ENCODE measurements at regions of chr17 and their contacts with region 1.

Region 1: DNA sequence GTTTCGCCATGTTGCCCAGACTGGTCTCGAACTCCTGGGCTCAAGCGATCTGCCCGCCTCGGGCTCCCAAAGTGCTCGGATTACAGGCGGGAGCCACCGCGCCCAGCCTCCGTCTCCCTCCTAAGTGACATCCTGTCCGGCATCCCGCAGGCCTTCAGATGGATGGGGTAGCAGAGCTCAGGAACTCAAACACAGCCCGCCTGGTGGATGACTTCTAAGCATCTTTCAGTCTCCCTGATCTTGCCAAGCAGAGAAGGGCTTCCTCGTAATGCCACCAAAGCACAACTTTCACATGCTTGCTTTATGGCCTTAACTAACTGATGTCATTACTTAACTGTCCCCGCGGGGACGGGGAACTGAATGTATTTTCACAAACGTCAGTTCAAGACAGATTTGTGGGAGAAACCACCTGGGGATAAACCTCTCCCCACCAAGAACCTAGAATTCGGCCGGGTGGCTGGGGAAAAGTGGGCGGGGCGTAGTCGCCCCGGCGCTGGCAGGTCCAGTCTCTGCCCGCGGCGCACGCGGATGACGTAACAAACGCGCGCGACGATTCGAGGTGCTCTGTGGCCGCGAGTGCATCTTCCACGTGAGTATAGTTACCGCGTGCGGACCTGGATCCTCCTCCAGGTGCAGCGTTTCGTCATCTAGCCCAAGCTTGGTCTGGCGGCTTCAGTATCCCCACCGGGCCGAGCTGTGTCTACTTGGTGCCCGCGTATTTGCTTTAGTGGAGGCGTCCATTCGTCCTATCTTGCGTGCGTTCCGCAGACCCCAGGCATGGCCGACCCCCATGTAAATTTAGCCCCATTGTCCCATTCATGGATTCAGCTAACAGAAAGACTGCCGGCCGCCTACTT is at the start of gene PFAS:
- DNase-seq: peak; percentile 93
- H3K4me3 ChIP-seq: peak within 1 kb of the TSS; percentile 82 to 96 (median 89)
- H3K27ac ChIP-seq: peak within 1 kb of the TSS; percentile 92
- H3K4me1 ChIP-seq: peaks cover 12% of the 10 kb centered on the region
- H3K27me3 ChIP-seq: no peaks in the 10 kb centered on the region
- CTCF ChIP-seq: no peak
- total RNA-seq, gene PFAS: 8.5 to 31.2 TPM

Region 2: DNA sequence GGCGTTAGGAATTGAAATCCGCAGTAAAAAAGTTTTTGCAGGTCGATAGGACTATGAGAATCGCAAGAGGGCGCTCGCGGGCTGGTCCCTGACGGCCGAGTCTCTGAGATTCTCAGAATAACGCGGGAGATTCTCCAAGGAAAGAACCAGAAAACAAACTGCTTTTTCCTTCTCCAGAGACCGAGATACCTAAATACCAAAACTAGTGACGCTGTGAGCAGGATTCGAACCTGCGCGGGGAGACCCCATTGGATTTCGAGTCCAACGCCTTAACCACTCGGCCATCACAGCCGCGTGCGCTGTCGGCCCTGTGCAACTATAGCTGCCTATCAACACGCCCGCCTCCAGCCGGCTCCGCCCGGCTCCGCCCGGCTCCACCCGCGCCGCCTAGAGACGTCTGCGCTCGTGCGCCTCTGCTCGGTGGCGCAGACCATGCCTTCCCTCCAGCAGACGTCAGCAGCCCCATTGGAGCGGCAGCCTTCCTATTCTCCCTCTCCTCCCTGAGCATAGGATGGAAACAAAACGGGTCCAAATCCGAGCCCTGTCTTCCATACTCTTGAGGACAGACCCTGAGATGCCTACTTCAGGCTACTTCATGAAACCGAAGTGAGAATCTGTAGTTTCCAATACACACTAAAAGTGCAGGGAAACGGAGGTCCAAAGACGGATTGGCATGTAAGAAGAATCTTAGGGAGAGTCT is 110.2 kb before region 1 on chr17:
- CTCF ChIA-PET with region 1: no interaction called
- dilution Hi-C with region 1: no loop called
- in situ Hi-C with region 1: no loop called
- intact Hi-C with region 1: loop called (anchors 1 kb)
- DNase-seq: peak; percentile 96
- H3K4me3 ChIP-seq: peak overlapping the region; percentile 10 to 44 (median 29)
- H3K27ac ChIP-seq: peak overlapping the region; percentile 61
- H3K4me1 ChIP-seq: peaks cover 18% of the 10 kb centered on the region
- H3K27me3 ChIP-seq: no peaks in the 10 kb centered on the region
- CTCF ChIP-seq: peak; percentile 83 to 89

Region 3: GRCh38 chr17:8173056-8173870 is 75.7 kb before region 1 on chr17:
- CTCF ChIA-PET with region 1: no interaction called
- dilution Hi-C with region 1: no loop called
- in situ Hi-C with region 1: no loop called
- intact Hi-C with region 1: loop called (anchors 1 kb)
- DNase-seq: peak; percentile 99
- H3K4me3 ChIP-seq: peak overlapping the region; percentile 38 to 53 (median 48)
- H3K27ac ChIP-seq: peak overlapping the region; percentile 100
- H3K4me1 ChIP-seq: peaks cover 25% of the 10 kb centered on the region
- H3K27me3 ChIP-seq: no peaks in the 10 kb centered on the region
- CTCF ChIP-seq: no peak

Region 4: GRCh38 chr17:8288336-8289102 is 39.5 kb after region 1 on chr17 and contains the start of gene RANGRF:
- CTCF ChIA-PET with region 1: interaction called, 3 read pairs
- dilution Hi-C with region 1: no loop called
- in situ Hi-C with region 1: no loop called
- intact Hi-C with region 1: loop called (anchors 5 kb)
- DNase-seq: peak; percentile 72
- H3K4me3 ChIP-seq: peak within 1 kb of the TSS; percentile 70 to 80 (median 76)
- H3K27ac ChIP-seq: peak within 1 kb of the TSS; percentile 62
- H3K4me1 ChIP-seq: peaks cover 12% of the 10 kb centered on the region
- H3K27me3 ChIP-seq: no peaks in the 10 kb centered on the region
- CTCF ChIP-seq: no peak
- total RNA-seq, gene RANGRF: 11.3 to 25.4 TPM

Region 5: DNA sequence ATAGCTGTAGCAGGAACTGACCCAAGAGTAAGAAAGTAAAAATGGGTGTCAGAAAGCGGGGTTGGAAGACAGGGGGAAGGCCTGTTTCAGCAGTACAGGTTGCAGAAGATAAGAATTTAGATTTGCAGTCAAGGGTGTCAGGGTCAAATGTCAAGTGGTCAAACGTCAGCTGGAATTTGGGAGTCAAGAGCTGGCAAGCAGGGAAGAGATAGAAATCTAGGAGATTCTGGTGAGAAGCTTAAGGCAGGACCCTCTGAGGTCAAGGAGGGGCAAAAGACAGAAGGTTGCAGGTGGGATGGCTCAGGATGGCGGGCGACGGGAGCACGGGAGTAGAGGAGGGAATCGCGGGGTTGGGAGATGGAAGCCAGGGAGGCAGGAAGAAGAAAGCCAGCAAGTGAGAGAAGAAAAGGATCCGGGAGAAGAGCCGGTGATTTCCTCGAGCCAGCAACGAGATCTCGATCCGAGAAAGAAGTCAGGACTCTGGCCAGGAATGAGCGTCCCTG is 45.9 kb after region 1 on chr17:
- CTCF ChIA-PET with region 1: no interaction called
- dilution Hi-C with region 1: loop called (anchors 5 kb)
- in situ Hi-C with region 1: no loop called
- intact Hi-C with region 1: loop called (anchors 1 kb)
- DNase-seq: no peak
- H3K4me3 ChIP-seq: peak overlapping the region; percentile 64 to 91 (median 74)
- H3K27ac ChIP-seq: peak overlapping the region; percentile 53
- H3K4me1 ChIP-seq: peaks cover 12% of the 10 kb centered on the region
- H3K27me3 ChIP-seq: no peaks in the 10 kb centered on the region
- CTCF ChIP-seq: no peak

Region 6: GRCh38 chr17:8300627-8301242 is 51.8 kb after region 1 on chr17:
- CTCF ChIA-PET with region 1: no interaction called
- dilution Hi-C with region 1: loop called (anchors 5 kb)
- in situ Hi-C with region 1: no loop called
- intact Hi-C with region 1: loop called (anchors 1 kb)
- DNase-seq: peak; percentile 50
- H3K4me3 ChIP-seq: no peak overlapping the region
- H3K27ac ChIP-seq: no peak overlapping the region
- H3K4me1 ChIP-seq: no peaks in the 10 kb centered on the region
- H3K27me3 ChIP-seq: no peaks in the 10 kb centered on the region
- CTCF ChIP-seq: peak; percentile 89 to 90